ENCODE measurements at regions of chr18 and their contacts with region 1.

Region 1: GRCh38 chr18:63320046-63320689 is 599 bp upstream of the BCL2 start:
- DNase-seq: peak; percentile 93
- ATAC-seq: peak; percentile 75
- H3K4me3 ChIP-seq: peak overlapping the region in 4 of 5 experiments; percentile 51 to 98 (median 88)
- H3K4me3 Mint-ChIP-seq: peak overlapping the region; percentile 95
- H3K27ac ChIP-seq: peak overlapping the region; percentile 52 to 92
- H3K27ac Mint-ChIP-seq: peak overlapping the region; percentile 96
- H3K4me1 ChIP-seq: peaks cover 18 to 34% of the 10 kb centered on the region in 2 donors
- H3K4me1 Mint-ChIP-seq: peaks cover 44% of the 10 kb centered on the region
- H3K27me3 ChIP-seq: no peaks in the 10 kb centered on the region
- H3K27me3 Mint-ChIP-seq: no peaks in the 10 kb centered on the region
- CTCF ChIP-seq: no peak

Region 2: GRCh38 chr18:62714671-62715435 is 605.3 kb before region 1 on chr18:
- CTCF ChIA-PET with region 1: no interaction called
- POLR2A ChIA-PET with region 1: no interaction called
- intact Hi-C with region 1: loop called (anchors 2 kb)
- DNase-seq: peak; percentile 96
- ATAC-seq: peak; percentile 81
- H3K4me3 ChIP-seq: peak overlapping the region; percentile 6 to 85 (median 75)
- H3K4me3 Mint-ChIP-seq: peak overlapping the region; percentile 95
- H3K27ac ChIP-seq: peak overlapping the region; percentile 85 to 92
- H3K27ac Mint-ChIP-seq: peak overlapping the region; percentile 97
- H3K4me1 ChIP-seq: peaks cover 15 to 18% of the 10 kb centered on the region in 2 donors
- H3K4me1 Mint-ChIP-seq: peaks cover 34% of the 10 kb centered on the region
- H3K27me3 ChIP-seq: no peaks in the 10 kb centered on the region
- H3K27me3 Mint-ChIP-seq: no peaks in the 10 kb centered on the region
- CTCF ChIP-seq: peak; percentile 77

Region 3: DNA sequence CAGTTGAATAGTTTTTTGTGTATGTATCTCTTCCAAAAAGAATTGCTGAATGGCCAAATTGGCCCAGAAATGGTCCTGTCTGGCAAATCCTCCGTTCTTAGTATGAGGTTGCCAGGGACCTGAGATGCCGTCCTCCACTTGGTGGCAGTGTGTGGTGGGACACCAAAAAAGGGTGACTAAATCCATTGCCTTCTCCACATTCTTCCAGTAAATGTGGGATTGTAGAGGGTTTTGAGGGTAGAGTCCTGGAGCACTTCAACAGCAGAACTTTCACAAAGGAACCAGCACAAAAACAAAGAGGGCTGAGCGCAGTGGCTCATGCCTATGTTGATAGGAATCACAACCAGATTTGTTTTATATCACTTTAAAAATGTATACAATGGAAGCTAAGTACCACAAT is 200.5 kb before region 1 on chr18:
- CTCF ChIA-PET with region 1: interaction called, 19 read pairs
- POLR2A ChIA-PET with region 1: interaction called, 3 read pairs
- intact Hi-C with region 1: no loop called
- DNase-seq: no peak
- ATAC-seq: no peak
- H3K4me3 ChIP-seq: no peak overlapping the region
- H3K4me3 Mint-ChIP-seq: no peak overlapping the region
- H3K27ac ChIP-seq: no peak overlapping the region
- H3K27ac Mint-ChIP-seq: no peak overlapping the region
- H3K4me1 ChIP-seq: no peaks in the 10 kb centered on the region
- H3K4me1 Mint-ChIP-seq: no peaks in the 10 kb centered on the region
- H3K27me3 ChIP-seq: no peaks in the 10 kb centered on the region
- H3K27me3 Mint-ChIP-seq: peaks cover 7% of the 10 kb centered on the region
- CTCF ChIP-seq: peak; percentile 35

Region 4: GRCh38 chr18:63161761-63162195 is 158.4 kb before region 1 on chr18:
- CTCF ChIA-PET with region 1: interaction called, 98 read pairs
- POLR2A ChIA-PET with region 1: interaction called, 30 read pairs
- intact Hi-C with region 1: loop called (anchors 1 kb)
- DNase-seq: peak; percentile 80
- ATAC-seq: peak; percentile 56
- H3K4me3 ChIP-seq: peak overlapping the region in 1 of 5 experiments; percentile 43
- H3K4me3 Mint-ChIP-seq: peak overlapping the region; percentile 79
- H3K27ac ChIP-seq: peak overlapping the region; percentile 89 to 97
- H3K27ac Mint-ChIP-seq: peak overlapping the region; percentile 96
- H3K4me1 ChIP-seq: peaks cover 77 to 79% of the 10 kb centered on the region in 2 donors
- H3K4me1 Mint-ChIP-seq: peaks cover 88% of the 10 kb centered on the region
- H3K27me3 ChIP-seq: no peaks in the 10 kb centered on the region
- H3K27me3 Mint-ChIP-seq: no peaks in the 10 kb centered on the region
- CTCF ChIP-seq: no peak

Region 5: DNA sequence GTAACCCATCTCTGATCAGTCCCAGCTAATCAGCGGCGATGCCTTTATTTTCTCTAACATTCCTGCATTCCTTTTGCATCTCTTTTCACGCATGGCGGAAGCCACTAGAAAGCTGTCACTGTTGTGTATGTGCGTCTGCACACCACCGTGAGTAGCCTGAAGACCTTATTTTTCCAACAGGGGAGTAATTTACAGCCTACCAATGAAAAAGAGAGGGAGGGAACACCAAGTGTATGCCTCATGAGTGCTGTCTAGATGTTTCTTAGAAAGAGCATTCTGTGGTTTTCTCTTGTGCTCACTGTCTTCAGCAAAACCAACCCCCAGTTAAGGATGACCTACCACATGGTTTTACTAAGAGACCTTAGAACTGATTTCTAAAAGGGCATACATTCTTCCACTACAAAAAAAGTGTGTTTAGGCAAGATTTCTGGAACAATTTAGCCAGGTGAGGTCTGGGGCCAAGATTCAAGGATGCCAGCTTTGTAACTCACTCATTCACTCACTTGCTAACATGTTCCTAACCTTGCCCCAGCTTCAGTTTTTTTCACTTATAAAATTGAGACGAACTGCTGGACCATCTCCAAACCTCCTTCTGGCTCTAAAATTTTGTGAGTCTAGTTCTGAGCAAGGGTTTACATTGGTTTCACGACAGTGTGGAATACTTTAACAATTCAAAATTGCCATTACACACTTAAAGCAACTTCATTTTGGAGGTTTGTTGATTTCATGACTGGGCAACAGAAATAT is 52.0 kb before region 1 on chr18:
- CTCF ChIA-PET with region 1: interaction called, 11 read pairs
- POLR2A ChIA-PET with region 1: no interaction called
- intact Hi-C with region 1: loop called (anchors 5 kb)
- DNase-seq: no peak
- ATAC-seq: no peak
- H3K4me3 ChIP-seq: no peak overlapping the region
- H3K4me3 Mint-ChIP-seq: no peak overlapping the region
- H3K27ac ChIP-seq: no peak overlapping the region
- H3K27ac Mint-ChIP-seq: peak overlapping the region; percentile 59
- H3K4me1 ChIP-seq: peaks cover 33 to 40% of the 10 kb centered on the region in 2 donors
- H3K4me1 Mint-ChIP-seq: peaks cover 55% of the 10 kb centered on the region
- H3K27me3 ChIP-seq: no peaks in the 10 kb centered on the region
- H3K27me3 Mint-ChIP-seq: no peaks in the 10 kb centered on the region
- CTCF ChIP-seq: no peak

Region 6: DNA sequence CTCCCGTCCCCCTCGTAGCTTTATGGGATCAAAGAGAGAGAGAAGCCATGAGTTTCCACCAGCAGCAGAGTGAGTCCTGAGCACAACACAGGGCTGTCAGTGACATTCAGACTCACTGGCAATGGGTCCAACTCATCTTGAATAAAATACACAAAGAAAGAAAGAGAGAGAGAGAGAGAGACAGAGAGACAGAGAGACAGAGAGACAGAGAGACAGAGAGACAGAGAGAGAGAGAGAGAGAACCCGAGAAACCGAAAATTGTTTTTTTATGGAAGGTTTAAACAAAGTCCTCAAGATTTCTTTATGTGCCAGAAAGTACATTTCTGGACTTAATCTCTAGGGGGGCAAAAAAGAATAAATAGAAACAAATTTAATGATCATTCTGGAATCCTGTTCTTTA is 10.9 kb after region 1 on chr18:
- CTCF ChIA-PET with region 1: interaction called, 12 read pairs
- POLR2A ChIA-PET with region 1: no interaction called
- intact Hi-C with region 1: no loop called
- DNase-seq: no peak
- ATAC-seq: no peak
- H3K4me3 ChIP-seq: no peak overlapping the region
- H3K4me3 Mint-ChIP-seq: no peak overlapping the region
- H3K27ac ChIP-seq: no peak overlapping the region
- H3K27ac Mint-ChIP-seq: no peak overlapping the region
- H3K4me1 ChIP-seq: no peaks in the 10 kb centered on the region
- H3K4me1 Mint-ChIP-seq: no peaks in the 10 kb centered on the region
- H3K27me3 ChIP-seq: no peaks in the 10 kb centered on the region
- H3K27me3 Mint-ChIP-seq: no peaks in the 10 kb centered on the region
- CTCF ChIP-seq: no peak

Region 7: GRCh38 chr18:63399300-63399699 is 79.1 kb after region 1 on chr18:
- CTCF ChIA-PET with region 1: no interaction called
- POLR2A ChIA-PET with region 1: no interaction called
- intact Hi-C with region 1: no loop called
- DNase-seq: no peak
- ATAC-seq: no peak
- H3K4me3 ChIP-seq: no peak overlapping the region
- H3K4me3 Mint-ChIP-seq: no peak overlapping the region
- H3K27ac ChIP-seq: no peak overlapping the region
- H3K27ac Mint-ChIP-seq: no peak overlapping the region
- H3K4me1 ChIP-seq: no peaks in the 10 kb centered on the region
- H3K4me1 Mint-ChIP-seq: no peaks in the 10 kb centered on the region
- H3K27me3 ChIP-seq: no peaks in the 10 kb centered on the region
- H3K27me3 Mint-ChIP-seq: no peaks in the 10 kb centered on the region
- CTCF ChIP-seq: no peak